HEK293 (cell line): ENCODE measurements at regions of chr17 and their contacts with region 1.

Region 1: GRCh38 chr17:2386400-2387085 is 14.3 kb downstream of the MNT start:
- H3K4me3 ChIP-seq: no peak overlapping the region
- H3K27ac ChIP-seq: no peak overlapping the region
- H3K4me1 ChIP-seq: peaks cover 14% of the 10 kb centered on the region
- CTCF ChIP-seq: no peak

Region 2: GRCh38 chr17:2361010-2361760 is 25.4 kb before region 1 on chr17:
- CTCF ChIA-PET with region 1: interaction called, 63 read pairs
- POLR2A ChIA-PET with region 1: no interaction called
- H3K4me3 ChIP-seq: no peak overlapping the region
- H3K27ac ChIP-seq: no peak overlapping the region
- H3K4me1 ChIP-seq: peaks cover 9% of the 10 kb centered on the region
- CTCF ChIP-seq: no peak

Region 3: GRCh38 chr17:2421315-2422147 is 35.0 kb after region 1 on chr17:
- CTCF ChIA-PET with region 1: interaction called, 470 read pairs
- POLR2A ChIA-PET with region 1: interaction called, 42 read pairs
- H3K4me3 ChIP-seq: no peak overlapping the region
- H3K27ac ChIP-seq: no peak overlapping the region
- H3K4me1 ChIP-seq: no peaks in the 10 kb centered on the region
- CTCF ChIP-seq: peak; percentile 31; the same call in 1 of the 2 replicates